A549 (cell line): ENCODE measurements at regions of chr11 and their contacts with region 1.

Region 1: GRCh38 chr11:11028017-11028692 is 170.3 kb upstream of the ZBED5 start:
- DNase-seq: peak; percentile 44 to 65
- ATAC-seq: peak; percentile 90 to 97
- H3K4me3 ChIP-seq: no peak overlapping the region
- H3K27ac ChIP-seq: no peak overlapping the region
- H3K4me1 ChIP-seq: peaks cover 13% of the 10 kb centered on the region; the same call in 2 of the 3 replicates
- CTCF ChIP-seq: peak; percentile 85
- EP300 ChIP-seq: no peak
- POLR2A ChIP-seq: no peak
- RAD21 ChIP-seq: peak; percentile 82 to 90

Region 2: GRCh38 chr11:9396752-9397151 is 1631.4 kb before region 1 on chr11:
- CTCF ChIA-PET with region 1: no interaction called
- POLR2A ChIA-PET with region 1: no interaction called
- DNase-seq: no peak
- ATAC-seq: no peak
- H3K4me3 ChIP-seq: no peak overlapping the region
- H3K27ac ChIP-seq: no peak overlapping the region
- H3K4me1 ChIP-seq: peaks cover 26% of the 10 kb centered on the region
- CTCF ChIP-seq: no peak
- EP300 ChIP-seq: no peak
- POLR2A ChIP-seq: no peak
- RAD21 ChIP-seq: no peak

Region 3: DNA sequence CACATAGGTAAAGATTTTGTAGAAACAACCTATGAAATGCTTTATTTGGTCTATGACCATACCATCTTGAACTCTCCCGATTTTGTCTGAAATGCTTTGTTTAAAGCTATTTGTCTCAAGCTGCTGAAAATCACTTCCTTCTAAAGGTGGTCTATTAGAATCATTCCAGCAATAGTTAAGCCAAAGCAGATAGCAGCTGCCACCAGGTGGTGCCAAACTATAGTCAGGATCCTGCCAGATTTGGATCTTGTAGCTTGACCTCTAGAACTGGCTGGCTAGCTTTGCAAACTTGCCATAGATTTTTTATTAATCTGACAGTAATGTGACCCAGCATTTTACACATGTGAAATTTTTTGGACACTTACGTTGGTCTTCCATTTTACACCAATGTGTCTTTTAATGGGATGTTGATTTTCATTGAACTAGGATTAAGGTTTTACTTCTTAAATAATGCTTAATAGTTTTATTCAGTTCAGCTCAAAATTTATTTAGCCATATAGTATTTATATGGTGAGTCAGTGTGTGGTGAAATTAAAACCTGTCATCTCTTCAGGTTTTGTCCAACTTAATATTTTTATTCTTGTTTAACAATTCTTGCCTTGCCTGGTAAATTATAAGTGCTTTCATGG is 257.4 kb before region 1 on chr11:
- CTCF ChIA-PET with region 1: interaction called, 14 read pairs
- POLR2A ChIA-PET with region 1: no interaction called
- DNase-seq: peak; percentile 60 to 72
- ATAC-seq: peak; percentile 73 to 85; a peak in 4 of 6 replicates
- H3K4me3 ChIP-seq: no peak overlapping the region
- H3K27ac ChIP-seq: no peak overlapping the region
- H3K4me1 ChIP-seq: no peaks in the 10 kb centered on the region
- CTCF ChIP-seq: peak; percentile 87
- EP300 ChIP-seq: no peak
- POLR2A ChIP-seq: no peak
- RAD21 ChIP-seq: peak; percentile 63 to 68

Region 4: DNA sequence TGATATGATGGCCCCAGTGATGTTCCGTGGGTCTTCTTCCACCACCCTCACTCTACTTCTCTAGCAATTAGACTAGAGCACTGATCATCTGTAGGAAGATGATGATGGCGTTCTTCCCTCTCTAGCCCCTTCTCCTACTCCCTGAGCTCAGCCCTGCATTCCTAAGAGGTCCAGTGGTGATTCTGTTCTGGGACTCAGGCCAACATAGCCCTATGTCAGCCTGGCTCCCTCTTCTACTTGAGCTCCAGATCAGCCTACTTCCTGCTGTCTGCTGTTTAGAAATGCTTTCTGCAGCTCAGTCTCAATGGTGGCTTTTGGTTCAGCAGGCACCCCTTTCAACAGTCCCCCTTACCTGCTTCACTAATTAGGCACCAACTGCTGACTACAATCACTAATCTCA is 84.2 kb before region 1 on chr11:
- CTCF ChIA-PET with region 1: interaction called, 10 read pairs
- POLR2A ChIA-PET with region 1: no interaction called
- DNase-seq: no peak
- ATAC-seq: peak; percentile 39 to 49; a peak in 2 of 6 replicates
- H3K4me3 ChIP-seq: no peak overlapping the region
- H3K27ac ChIP-seq: peak overlapping the region in 1 of 2 experiments; percentile 13; a peak in 1 of 6 replicates
- H3K4me1 ChIP-seq: peaks cover 9% of the 10 kb centered on the region; the same call in 2 of the 3 replicates
- CTCF ChIP-seq: no peak
- EP300 ChIP-seq: no peak
- POLR2A ChIP-seq: no peak
- RAD21 ChIP-seq: no peak

Region 5: DNA sequence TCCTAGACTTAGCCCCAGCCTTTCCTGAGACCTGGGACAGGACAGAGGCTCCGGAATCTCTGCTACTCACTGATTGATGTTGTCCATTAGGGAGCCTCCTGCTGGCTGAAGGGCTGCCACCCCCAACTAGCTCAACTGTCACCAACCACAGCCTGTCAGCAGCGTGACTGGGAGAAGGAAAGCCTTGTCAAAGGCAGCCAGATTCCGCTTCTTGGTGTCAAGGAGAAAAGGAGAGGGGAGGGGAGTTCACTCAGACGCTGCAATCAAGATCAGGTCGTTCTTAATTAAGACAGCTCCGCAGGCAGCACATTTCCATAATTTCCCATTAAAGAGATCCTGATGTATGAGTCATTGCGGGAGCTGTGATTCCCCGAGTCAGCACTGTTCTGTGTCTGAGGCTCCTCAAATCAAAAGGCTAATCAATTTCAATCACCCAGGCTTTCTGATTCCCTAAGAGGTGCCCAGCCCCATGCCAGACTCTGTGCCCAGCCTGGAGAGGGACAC is 17.5 kb before region 1 on chr11:
- CTCF ChIA-PET with region 1: interaction called, 47 read pairs
- POLR2A ChIA-PET with region 1: no interaction called
- DNase-seq: peak; percentile 40 to 55
- ATAC-seq: peak; percentile 92 to 98
- H3K4me3 ChIP-seq: no peak overlapping the region
- H3K27ac ChIP-seq: peak overlapping the region in 1 of 2 experiments; percentile 47; a peak in 1 of 6 replicates
- H3K4me1 ChIP-seq: peaks cover 13% of the 10 kb centered on the region; the same call in 2 of the 3 replicates
- CTCF ChIP-seq: peak; percentile 36
- EP300 ChIP-seq: no peak
- POLR2A ChIP-seq: no peak
- RAD21 ChIP-seq: peak; percentile 49 to 58; a peak in 3 of 5 replicates

Region 6: DNA sequence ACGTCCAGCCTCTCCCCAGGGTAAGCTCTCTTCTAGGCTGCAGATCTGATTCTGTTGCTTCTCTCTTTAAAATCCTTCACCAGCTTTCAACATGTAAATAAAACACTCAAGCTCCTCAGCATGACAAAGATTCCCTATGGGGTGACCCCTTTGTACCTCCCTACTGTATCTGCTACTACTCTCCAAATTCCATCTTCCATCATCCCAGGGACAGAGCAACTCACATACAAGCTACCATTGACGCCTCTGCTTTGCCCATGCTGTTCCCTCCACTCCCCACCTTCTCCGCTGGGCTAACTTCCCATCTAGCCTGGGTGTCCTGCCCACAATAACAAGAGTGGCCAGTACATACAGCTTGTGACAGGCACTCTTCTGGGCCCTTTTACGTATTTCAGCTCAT is 37.2 kb after region 1 on chr11:
- CTCF ChIA-PET with region 1: no interaction called
- POLR2A ChIA-PET with region 1: no interaction called
- DNase-seq: no peak
- ATAC-seq: no peak
- H3K4me3 ChIP-seq: no peak overlapping the region
- H3K27ac ChIP-seq: no peak overlapping the region
- H3K4me1 ChIP-seq: no peaks in the 10 kb centered on the region
- CTCF ChIP-seq: no peak
- EP300 ChIP-seq: no peak
- POLR2A ChIP-seq: no peak
- RAD21 ChIP-seq: no peak

Region 7: DNA sequence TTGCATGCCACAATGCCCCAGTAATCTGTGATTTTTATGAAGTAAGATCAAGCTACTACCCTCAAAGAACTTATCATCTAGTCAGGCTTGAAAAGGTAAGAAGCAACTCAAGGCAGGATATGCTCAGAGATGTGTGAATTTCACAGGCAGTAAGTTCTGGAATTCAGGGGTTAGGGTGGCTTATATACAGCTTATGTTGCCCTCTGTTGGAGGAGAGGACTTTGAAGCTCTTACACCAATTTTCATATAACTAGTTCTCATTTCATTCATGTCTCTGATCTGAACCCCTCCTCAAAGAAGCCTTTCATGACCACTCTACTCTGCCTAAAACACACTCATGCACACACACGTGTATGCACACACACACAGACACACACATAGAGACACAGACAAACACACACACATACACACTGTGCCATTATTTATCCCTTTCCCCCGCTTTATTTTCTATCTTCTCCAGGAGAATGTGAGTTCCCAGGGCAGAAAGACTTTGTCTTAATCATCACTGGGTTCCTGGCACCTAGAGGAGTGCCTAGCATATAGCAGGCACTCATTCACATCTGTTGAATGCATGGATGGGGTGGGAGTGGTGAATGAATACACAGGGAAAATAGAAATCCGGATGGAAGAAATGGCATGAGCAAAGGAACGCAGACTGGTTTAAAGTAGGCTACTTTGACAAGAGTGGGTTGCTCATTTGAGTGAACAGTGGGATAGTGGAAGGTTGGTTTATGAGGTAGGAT is 50.4 kb after region 1 on chr11:
- CTCF ChIA-PET with region 1: interaction called, 10 read pairs
- POLR2A ChIA-PET with region 1: no interaction called
- DNase-seq: peak in 1 of 2 experiments; percentile 40
- ATAC-seq: peak in 1 of 2 experiments; percentile 72; a peak in 3 of 6 replicates
- H3K4me3 ChIP-seq: no peak overlapping the region
- H3K27ac ChIP-seq: no peak overlapping the region
- H3K4me1 ChIP-seq: no peaks in the 10 kb centered on the region
- CTCF ChIP-seq: peak; percentile 21; the same call in 1 of the 3 replicates
- EP300 ChIP-seq: no peak
- POLR2A ChIP-seq: no peak
- RAD21 ChIP-seq: peak in 1 of 2 experiments; percentile 43; a peak in 3 of 5 replicates

Region 8: DNA sequence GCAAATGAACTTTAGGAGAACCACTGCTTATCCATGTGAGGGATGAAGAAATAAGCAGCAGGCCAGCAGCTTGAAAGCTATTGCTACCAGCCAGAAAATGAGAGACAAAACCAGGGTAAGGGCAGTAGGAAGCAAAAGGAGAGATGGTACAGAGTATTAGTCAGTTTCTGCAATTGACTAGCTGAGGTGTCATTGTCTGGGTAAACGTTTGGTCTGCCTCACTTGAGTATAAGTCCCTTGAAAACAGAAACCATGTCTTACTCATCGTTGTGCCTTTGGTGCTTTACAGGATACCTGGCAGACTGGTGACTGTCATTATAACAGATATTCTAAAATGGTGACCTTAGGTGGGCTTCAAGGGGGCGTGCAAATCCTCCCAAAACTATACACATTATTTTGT is 749.7 kb after region 1 on chr11:
- CTCF ChIA-PET with region 1: interaction called, 12 read pairs
- POLR2A ChIA-PET with region 1: no interaction called
- DNase-seq: no peak
- ATAC-seq: no peak
- H3K4me3 ChIP-seq: no peak overlapping the region
- H3K27ac ChIP-seq: no peak overlapping the region
- H3K4me1 ChIP-seq: no peaks in the 10 kb centered on the region
- CTCF ChIP-seq: no peak
- EP300 ChIP-seq: no peak
- POLR2A ChIP-seq: no peak
- RAD21 ChIP-seq: no peak